PC-3 (cell line): ENCODE measurements at regions of chr11 and their contacts with region 1.

Region 1: DNA sequence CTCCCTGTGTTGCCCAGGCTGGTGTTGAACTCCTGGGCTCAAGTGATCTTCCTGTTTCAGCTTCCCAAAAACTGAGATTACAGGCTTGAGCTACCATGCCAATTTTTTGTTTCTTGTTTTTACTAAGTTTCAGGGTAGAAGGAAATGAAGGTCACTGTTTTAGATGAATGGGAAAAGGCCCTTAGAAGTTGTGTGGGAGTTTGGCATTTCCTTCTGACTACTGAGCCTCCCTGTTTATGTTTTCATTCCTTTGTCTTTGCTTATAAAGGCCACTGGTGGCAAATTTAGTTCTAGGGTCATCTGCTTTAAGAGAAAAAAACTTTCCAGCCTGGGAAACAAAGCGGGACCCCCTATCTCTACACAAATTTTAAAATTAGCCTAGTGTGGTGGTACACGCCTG is 22.1 kb downstream of the SRPRA start:
- DNase-seq: no peak
- ATAC-seq: no peak
- H3K4me3 ChIP-seq: no peak overlapping the region
- H3K27ac ChIP-seq: no peak overlapping the region
- H3K4me1 ChIP-seq: no peaks in the 10 kb centered on the region
- H3K27me3 ChIP-seq: no peaks in the 10 kb centered on the region
- CTCF ChIP-seq: no peak

Region 2: DNA sequence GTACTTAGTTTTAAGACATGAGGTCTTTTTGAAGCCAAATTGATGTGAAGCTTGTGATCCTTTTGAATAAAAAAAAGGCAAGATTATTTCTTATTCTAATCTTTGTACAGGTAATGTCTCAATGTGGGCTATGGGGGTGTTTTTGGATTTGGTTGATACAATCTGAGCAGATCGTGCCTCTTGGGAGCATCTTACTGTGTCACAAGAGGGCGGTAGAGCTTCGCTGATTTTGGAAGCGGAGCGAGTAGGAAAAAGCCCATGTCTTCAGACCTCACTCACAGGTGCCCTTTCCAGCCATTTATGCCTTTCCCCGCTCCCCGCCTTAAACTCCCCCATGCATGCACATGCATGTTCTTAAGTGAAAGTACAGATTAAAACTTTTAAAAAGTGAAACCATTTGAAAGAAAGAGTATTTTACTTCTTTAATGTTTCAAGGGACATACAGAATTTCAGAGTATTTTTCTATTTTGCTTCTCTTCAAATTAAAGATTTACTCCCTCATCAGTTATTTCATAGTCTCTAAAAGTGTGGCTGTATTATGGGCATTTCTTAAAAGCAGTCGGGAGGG is 323.5 kb before region 1 on chr11:
- CTCF ChIA-PET with region 1: interaction called, 14 read pairs
- POLR2A ChIA-PET with region 1: no interaction called
- intact Hi-C with region 1: no loop called
- DNase-seq: peak; percentile 94
- ATAC-seq: peak; percentile 86
- H3K4me3 ChIP-seq: no peak overlapping the region
- H3K27ac ChIP-seq: no peak overlapping the region
- H3K4me1 ChIP-seq: no peaks in the 10 kb centered on the region
- H3K27me3 ChIP-seq: peaks cover 6% of the 10 kb centered on the region; the same call in 1 of the 2 replicates
- CTCF ChIP-seq: peak; percentile 93